ENCODE measurements at regions of chr20 and their contacts with region 1.

Region 1: GRCh38 chr20:5126512-5127203 is at the start of gene CDS2:
- DNase-seq: peak; percentile 90 to 97 (median 94)
- ATAC-seq: peak; percentile 92
- H3K4me3 ChIP-seq: peak within 1 kb of the TSS; percentile 81
- H3K27ac ChIP-seq: peak within 1 kb of the TSS; percentile 90
- H3K4me1 ChIP-seq: peaks cover 12 to 21% of the 10 kb centered on the region in 2 experiments; a peak in 4 of 5 replicates
- H3K27me3 ChIP-seq: no peaks in the 10 kb centered on the region
- CTCF ChIP-seq: peak; percentile 47 to 68 (median 65); a peak in 5 of 6 replicates
- EP300 ChIP-seq: no peak
- POLR2A ChIP-seq: no peak
- RAD21 ChIP-seq: peak; percentile 59 to 61; a peak in 3 of 4 replicates
- polyA plus RNA-seq, gene CDS2: 8.7 to 12.2 TPM

Region 2: DNA sequence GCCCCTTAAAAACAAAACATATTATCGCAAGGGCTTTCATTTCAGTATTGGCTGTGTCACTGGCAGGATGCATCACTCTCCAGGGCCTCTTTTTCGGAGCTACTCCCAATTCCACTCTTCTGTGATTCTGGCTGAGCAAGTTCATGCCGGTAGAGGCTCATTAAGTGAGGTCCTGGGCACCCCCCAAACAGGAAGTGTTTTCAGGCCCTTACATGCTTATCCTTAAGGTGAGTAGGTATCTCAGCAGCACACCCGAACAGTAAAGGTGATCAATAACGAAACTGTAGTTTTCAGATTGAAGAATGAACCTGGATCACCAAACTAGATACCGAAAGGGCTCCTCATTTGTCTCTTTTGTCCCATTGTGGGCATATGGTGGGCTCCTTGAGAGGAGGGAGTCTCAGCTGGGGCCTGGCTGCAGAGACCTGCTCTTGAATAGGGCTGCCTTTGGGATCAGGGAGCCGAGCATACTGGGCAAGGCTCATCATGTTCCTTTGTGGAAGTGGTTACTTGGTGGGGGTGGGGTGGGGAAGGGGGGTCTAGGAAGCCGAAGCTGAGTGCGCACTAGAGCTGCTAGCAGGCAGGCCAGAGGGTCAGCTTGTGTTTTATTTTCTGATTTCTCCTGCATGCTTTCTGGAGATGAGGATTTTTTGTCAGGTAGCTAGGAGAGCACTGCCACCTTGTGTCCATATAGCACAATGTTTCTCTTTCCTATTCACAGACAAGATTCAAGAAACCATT is 65.3 kb after region 1 on chr20:
- CTCF ChIA-PET with region 1: interaction called, 17 read pairs
- POLR2A ChIA-PET with region 1: interaction called, 3 read pairs
- in situ Hi-C with region 1: loop called (anchors 5 kb)
- intact Hi-C with region 1: loop called (anchors 1 kb)
- DNase-seq: peak; percentile 54 to 63 (median 57)
- ATAC-seq: peak; percentile 83
- H3K4me3 ChIP-seq: no peak overlapping the region
- H3K27ac ChIP-seq: no peak overlapping the region
- H3K4me1 ChIP-seq: no peaks in the 10 kb centered on the region
- H3K27me3 ChIP-seq: no peaks in the 10 kb centered on the region
- CTCF ChIP-seq: peak; percentile 50 to 82 (median 64); a peak in 5 of 6 replicates
- EP300 ChIP-seq: no peak
- POLR2A ChIP-seq: no peak
- RAD21 ChIP-seq: peak; percentile 86 to 91

Region 3: GRCh38 chr20:5448449-5449118 is 321.9 kb after region 1 on chr20:
- CTCF ChIA-PET with region 1: no interaction called
- POLR2A ChIA-PET with region 1: no interaction called
- in situ Hi-C with region 1: no loop called
- intact Hi-C with region 1: loop called (anchors 10 kb)
- DNase-seq: peak; percentile 29 to 56 (median 47)
- ATAC-seq: peak; percentile 72
- H3K4me3 ChIP-seq: no peak overlapping the region
- H3K27ac ChIP-seq: no peak overlapping the region
- H3K4me1 ChIP-seq: no peaks in the 10 kb centered on the region
- H3K27me3 ChIP-seq: no peaks in the 10 kb centered on the region
- CTCF ChIP-seq: peak; percentile 54 to 59 (median 58); a peak in 5 of 6 replicates
- EP300 ChIP-seq: no peak
- POLR2A ChIP-seq: no peak
- RAD21 ChIP-seq: peak; percentile 24 to 60

Measured in K562 (cell line).